Activated CD4-positive, alpha-beta T cell treated with anti-CD3 and anti-CD28 coated beads, Interleukin-2, amount 10 ng/mL, durations not matched to agents 7 days and 5 days (primary cell): ENCODE measurements at regions of chr7 and their contacts with region 1.

Region 1: DNA sequence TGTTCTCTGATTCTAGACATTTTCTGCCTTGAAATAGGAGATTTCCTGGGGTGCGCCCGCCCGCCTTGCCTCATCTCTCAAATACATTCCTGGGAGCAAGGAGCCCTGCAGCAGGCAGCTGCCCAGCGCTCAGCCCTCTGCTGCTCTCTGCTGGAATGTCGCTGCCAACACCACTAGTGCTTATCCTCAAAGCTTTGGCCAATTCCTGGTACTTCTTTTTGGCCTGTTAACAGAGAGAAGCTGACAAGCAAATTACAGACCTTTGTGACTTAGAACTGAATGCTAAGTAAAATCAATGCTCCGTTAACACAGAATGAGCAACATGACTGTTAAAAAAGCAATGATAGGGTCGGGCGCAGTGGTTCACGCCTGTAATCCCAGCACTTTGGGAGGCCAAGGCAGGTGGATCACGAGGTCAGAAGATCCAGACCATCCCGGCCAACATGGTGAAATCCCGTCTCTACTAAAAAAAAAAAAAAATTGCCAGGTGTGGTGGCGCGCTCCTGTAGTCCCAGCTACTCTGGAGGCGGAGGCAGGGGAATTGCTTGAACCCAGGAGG is 41.9 kb upstream of the SYPL1 start:
- DNase-seq: peak; percentile 74
- H3K4me3 Mint-ChIP-seq: no peak overlapping the region
- H3K27ac Mint-ChIP-seq: peak overlapping the region; percentile 33
- H3K4me1 Mint-ChIP-seq: peaks cover 13% of the 10 kb centered on the region
- H3K27me3 Mint-ChIP-seq: peaks cover 34% of the 10 kb centered on the region

Region 2: DNA sequence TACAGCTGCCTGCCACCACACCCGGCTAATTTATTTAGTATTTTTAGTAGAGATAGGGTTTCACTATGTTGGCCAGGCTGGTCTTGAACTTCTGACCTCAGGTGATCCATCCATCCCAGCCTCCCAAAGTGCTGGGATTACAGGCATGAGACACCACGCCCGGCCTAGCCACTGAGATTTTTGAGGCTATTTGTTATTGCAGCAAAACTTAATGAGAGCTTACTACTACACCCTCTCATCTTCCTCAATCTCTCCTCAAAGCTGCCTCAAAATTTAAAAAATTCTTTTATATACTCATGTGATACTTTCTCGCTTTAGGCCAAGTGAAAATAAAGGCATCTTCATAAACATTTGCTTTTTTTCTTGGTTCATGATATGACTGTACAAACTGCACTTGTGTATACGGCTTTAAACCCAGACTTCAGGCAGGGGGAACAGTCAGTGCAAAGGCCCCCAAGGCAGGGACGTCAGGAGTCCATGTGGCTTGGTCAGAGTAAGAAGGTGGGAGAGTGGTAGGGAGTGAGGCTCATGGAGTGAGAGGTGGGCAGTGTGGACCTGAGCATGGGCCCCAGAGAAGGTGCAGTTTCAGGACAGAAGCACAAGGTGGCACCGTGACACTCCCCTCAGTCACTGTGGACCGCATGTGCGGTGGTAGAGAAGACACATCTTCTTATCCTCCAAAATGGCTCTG is 97.3 kb before region 1 on chr7:
- CTCF ChIA-PET with region 1: interaction called, 38 read pairs
- POLR2A ChIA-PET with region 1: no interaction called
- DNase-seq: peak; percentile 75
- H3K4me3 Mint-ChIP-seq: no peak overlapping the region
- H3K27ac Mint-ChIP-seq: no peak overlapping the region
- H3K4me1 Mint-ChIP-seq: peaks cover 26% of the 10 kb centered on the region
- H3K27me3 Mint-ChIP-seq: peaks cover 5% of the 10 kb centered on the region

Region 3: DNA sequence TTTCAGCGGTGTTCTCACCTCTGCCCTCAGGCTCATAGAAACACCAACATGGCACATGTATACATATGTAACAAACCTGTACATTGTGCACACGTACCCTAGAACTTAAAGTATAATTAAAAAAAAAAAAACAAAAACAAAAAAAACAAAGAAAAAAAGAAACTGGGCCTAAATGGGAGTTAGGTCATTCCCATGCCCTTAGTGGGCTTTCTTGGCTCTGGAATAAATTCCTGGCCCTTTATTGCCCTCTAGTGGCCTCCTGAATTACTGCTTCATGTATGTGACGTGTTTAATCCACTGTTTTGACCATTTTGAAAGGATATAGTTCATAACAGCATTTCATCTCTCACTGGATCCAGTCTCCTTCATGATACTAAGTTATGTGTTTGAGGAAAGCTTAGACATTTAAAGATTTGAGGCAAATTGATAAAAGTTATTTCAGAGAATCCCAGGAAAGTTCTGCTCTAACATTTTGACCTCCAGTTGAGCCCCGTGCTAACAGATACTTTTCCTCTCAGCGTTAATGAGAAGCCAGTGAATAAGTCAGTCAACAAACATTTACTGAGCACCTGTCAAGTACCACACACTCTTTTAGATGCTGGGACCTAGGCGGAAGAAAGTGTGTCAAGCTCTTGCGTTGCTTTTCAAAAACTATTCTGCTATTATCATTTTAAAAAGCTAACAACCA is 12.8 kb after region 1 on chr7:
- CTCF ChIA-PET with region 1: interaction called, 14 read pairs
- POLR2A ChIA-PET with region 1: no interaction called
- DNase-seq: peak; percentile 54
- H3K4me3 Mint-ChIP-seq: no peak overlapping the region
- H3K27ac Mint-ChIP-seq: no peak overlapping the region
- H3K4me1 Mint-ChIP-seq: no peaks in the 10 kb centered on the region
- H3K27me3 Mint-ChIP-seq: peaks cover 3% of the 10 kb centered on the region

Region 4: GRCh38 chr7:106317971-106318370 is 164.0 kb after region 1 on chr7:
- CTCF ChIA-PET with region 1: no interaction called
- POLR2A ChIA-PET with region 1: no interaction called
- DNase-seq: no peak
- H3K4me3 Mint-ChIP-seq: no peak overlapping the region
- H3K27ac Mint-ChIP-seq: no peak overlapping the region
- H3K4me1 Mint-ChIP-seq: peaks cover 2% of the 10 kb centered on the region
- H3K27me3 Mint-ChIP-seq: peaks cover 12% of the 10 kb centered on the region